PC-3 (cell line): ENCODE measurements at regions of chr4 and their contacts with region 1.

Region 1: DNA sequence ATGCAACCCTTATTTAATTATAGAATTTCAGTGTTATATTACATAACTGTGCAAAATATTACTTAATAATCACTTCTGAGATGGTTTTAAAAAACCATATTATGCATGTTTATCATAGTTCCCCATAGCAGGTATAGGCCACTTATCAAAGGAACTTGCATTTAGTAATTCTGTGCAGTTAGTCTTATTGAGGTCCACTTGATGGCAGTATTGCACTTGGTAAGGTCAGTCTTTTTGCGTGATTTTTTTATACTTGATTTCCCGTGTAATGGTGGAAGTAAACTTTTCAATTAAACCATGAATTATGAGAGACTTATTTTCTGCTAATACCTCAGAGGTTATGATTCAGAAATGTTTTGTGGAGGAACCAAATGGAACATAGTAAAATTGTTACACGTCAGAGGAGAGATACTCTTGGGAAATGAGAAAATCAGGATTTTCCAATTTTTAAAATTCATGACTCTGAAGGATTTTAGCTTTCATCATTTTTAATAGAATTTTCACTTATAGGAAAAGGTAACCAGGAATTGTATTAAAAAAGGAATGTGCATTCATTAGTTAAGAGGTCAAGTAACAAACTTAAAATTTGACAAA is 230.0 kb downstream of the CCSER1 start:
- DNase-seq: peak; percentile 58
- ATAC-seq: peak; percentile 54
- H3K4me3 ChIP-seq: no peak overlapping the region; the same call in 1 of the 2 replicates
- H3K27ac ChIP-seq: no peak overlapping the region
- H3K4me1 ChIP-seq: no peaks in the 10 kb centered on the region
- H3K27me3 ChIP-seq: no peaks in the 10 kb centered on the region
- CTCF ChIP-seq: peak; percentile 83

Region 2: GRCh38 chr4:90317785-90318184 is 39.4 kb before region 1 on chr4:
- CTCF ChIA-PET with region 1: no interaction called
- POLR2A ChIA-PET with region 1: no interaction called
- intact Hi-C with region 1: loop called (anchors 2 kb)
- DNase-seq: peak; percentile 77
- ATAC-seq: peak; percentile 56
- H3K4me3 ChIP-seq: peak overlapping the region; percentile 44; the same call in 1 of the 2 replicates
- H3K27ac ChIP-seq: peak overlapping the region; percentile 97
- H3K4me1 ChIP-seq: peaks cover 42% of the 10 kb centered on the region
- H3K27me3 ChIP-seq: no peaks in the 10 kb centered on the region
- CTCF ChIP-seq: no peak

Region 3: DNA sequence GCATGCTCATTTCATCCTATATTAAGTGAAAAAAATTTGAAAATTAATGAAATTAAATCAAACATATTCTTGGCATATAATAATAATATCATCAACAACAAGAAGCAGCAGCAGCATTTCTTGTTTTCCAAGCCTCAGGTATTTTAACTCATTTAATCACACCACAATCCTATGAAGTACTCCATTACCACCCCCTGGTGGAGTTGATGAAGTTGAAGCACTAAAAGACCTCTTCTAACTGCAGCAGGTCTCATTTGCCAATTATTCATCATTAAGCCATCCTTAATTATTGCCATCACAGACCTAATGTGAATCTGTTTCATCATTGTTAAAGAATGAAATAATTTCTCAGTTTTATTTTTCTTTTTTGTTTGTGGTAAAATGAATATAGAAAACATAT is 1145.2 kb after region 1 on chr4:
- CTCF ChIA-PET with region 1: no interaction called
- POLR2A ChIA-PET with region 1: no interaction called
- intact Hi-C with region 1: loop called (anchors 5 kb)
- DNase-seq: peak; percentile 45
- ATAC-seq: no peak
- H3K4me3 ChIP-seq: no peak overlapping the region
- H3K27ac ChIP-seq: no peak overlapping the region
- H3K4me1 ChIP-seq: no peaks in the 10 kb centered on the region
- H3K27me3 ChIP-seq: no peaks in the 10 kb centered on the region
- CTCF ChIP-seq: peak; percentile 55